Aorta (tissue), 5 donors: ENCODE measurements at regions of chr22 and their contacts with region 1.

Region 1: GRCh38 chr22:24189249-24190158 is 8.2 kb downstream of the SUSD2 start:
- DNase-seq: peak; percentile 81 to 91
- ATAC-seq: peak; percentile 93
- H3K4me3 ChIP-seq: no peak overlapping the region
- H3K27ac ChIP-seq: no peak overlapping the region
- H3K4me1 ChIP-seq: no peaks in the 10 kb centered on the region
- H3K27me3 ChIP-seq: no peaks in the 10 kb centered on the region

Region 2: GRCh38 chr22:24230911-24231656 is 41.6 kb after region 1 on chr22:
- intact Hi-C with region 1: no loop called
- DNase-seq: peak in 1 of 2 donors; percentile 85
- ATAC-seq: no peak
- H3K4me3 ChIP-seq: no peak overlapping the region
- H3K27ac ChIP-seq: no peak overlapping the region
- H3K4me1 ChIP-seq: no peaks in the 10 kb centered on the region
- H3K27me3 ChIP-seq: no peaks in the 10 kb centered on the region

Region 3: GRCh38 chr22:24247011-24247507 is 57.6 kb after region 1 on chr22:
- intact Hi-C with region 1: loop called (anchors 2 kb)
- DNase-seq: no peak
- ATAC-seq: peak; percentile 59
- H3K4me3 ChIP-seq: no peak overlapping the region
- H3K27ac ChIP-seq: peak overlapping the region; percentile 64 to 84
- H3K4me1 ChIP-seq: no peaks in the 10 kb centered on the region
- H3K27me3 ChIP-seq: no peaks in the 10 kb centered on the region

Region 4: GRCh38 chr22:24289114-24289513 is 99.6 kb after region 1 on chr22:
- intact Hi-C with region 1: no loop called
- DNase-seq: no peak
- ATAC-seq: peak; percentile 81
- H3K4me3 ChIP-seq: no peak overlapping the region
- H3K27ac ChIP-seq: no peak overlapping the region
- H3K4me1 ChIP-seq: peaks cover 3 to 7% of the 10 kb centered on the region in 2 donors
- H3K27me3 ChIP-seq: no peaks in the 10 kb centered on the region